ENCODE measurements at regions of chr4 and their contacts with region 1.

Region 1: DNA sequence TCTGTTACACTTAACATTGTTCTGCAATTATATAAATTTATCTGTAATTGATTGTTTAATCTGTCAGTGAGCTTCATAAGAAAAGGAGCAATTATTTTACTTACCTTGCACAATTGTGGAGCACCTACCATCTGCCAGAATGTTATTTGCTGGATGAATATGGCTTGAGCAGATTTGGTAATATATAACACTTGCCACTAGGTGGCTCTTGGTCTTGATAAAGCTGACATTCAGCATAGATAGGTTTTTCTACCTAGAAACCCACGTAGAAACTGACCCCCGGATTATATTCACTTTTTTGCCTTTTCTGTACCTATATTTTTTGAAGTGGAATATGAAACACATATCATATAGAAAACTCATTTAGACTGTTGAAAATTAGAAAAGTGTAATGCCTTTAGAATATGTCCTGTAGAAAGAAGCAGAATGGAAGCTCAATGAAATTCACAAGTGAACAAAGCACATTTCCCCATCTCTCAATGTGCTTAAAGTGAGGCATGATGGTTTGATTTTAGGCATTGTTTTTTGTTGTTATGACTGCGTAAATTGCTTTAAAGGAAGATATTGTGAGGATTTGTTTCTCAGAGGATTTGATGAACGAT is 9.5 kb downstream of the RBPJ start:
- DNase-seq: no peak
- H3K4me3 ChIP-seq: peak overlapping the region in 1 of 4 experiments; percentile 38; a peak in 1 of 8 replicates
- H3K27ac ChIP-seq: peak overlapping the region; percentile 12; the same call in 1 of the 2 replicates
- H3K4me1 ChIP-seq: peaks cover 7 to 15% (median 14%) of the 10 kb centered on the region in 4 experiments; a peak in 6 of 7 replicates
- H3K27me3 ChIP-seq: no peaks in the 10 kb centered on the region
- CTCF ChIP-seq: peak in 2 of 3 experiments; percentile 52 to 65; a peak in 2 of 4 replicates
- EP300 ChIP-seq: no peak
- POLR2A ChIP-seq: no peak
- RAD21 ChIP-seq: peak; percentile 60 to 67

Region 2: DNA sequence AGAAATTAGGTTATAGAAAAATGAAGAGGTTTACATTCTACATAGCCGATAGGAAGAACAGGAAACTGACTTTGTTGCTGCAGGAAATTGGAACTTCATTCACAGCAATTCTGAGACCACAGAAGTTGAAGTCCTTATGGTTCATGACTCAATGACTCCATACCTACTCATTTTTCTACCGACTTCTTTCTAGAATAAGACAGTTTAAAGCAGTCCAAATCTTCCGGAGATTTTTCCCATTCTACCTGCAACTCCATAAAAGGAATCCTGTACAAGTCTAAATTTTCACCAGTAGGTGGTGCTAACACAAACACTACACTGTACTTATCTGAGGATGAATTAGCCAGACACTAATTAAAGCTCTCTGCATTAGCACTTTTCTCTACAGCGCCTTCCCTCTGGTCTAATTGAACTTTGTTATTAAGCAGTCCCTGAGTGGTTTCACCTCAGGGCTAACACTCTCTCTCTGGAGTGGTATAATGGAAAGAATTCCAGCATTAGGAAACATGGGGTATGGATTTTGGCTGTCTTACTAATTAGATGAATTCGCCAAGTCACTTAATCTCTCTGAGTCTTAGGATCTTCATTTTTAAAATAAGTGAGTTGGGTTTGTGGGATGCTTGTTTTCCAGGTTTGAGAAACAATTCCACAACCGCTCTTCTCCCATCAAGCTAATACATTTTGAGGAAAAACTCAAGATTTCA is 248.3 kb before region 1 on chr4:
- CTCF ChIA-PET with region 1: interaction called, 17 read pairs
- POLR2A ChIA-PET with region 1: no interaction called
- DNase-seq: no peak
- H3K4me3 ChIP-seq: no peak overlapping the region
- H3K27ac ChIP-seq: no peak overlapping the region
- H3K4me1 ChIP-seq: peaks cover 0 to 4% (median 0%) of the 10 kb centered on the region in 4 experiments; a peak in 2 of 7 replicates
- H3K27me3 ChIP-seq: no peaks in the 10 kb centered on the region
- CTCF ChIP-seq: peak in 2 of 3 experiments; percentile 39 to 67; a peak in 2 of 4 replicates
- EP300 ChIP-seq: no peak
- POLR2A ChIP-seq: no peak
- RAD21 ChIP-seq: peak; percentile 68 to 70

Region 3: GRCh38 chr4:26342328-26343037 is 12.2 kb after region 1 on chr4:
- CTCF ChIA-PET with region 1: interaction called, 49 read pairs
- POLR2A ChIA-PET with region 1: interaction called, 13 read pairs
- DNase-seq: no peak
- H3K4me3 ChIP-seq: no peak overlapping the region
- H3K27ac ChIP-seq: no peak overlapping the region
- H3K4me1 ChIP-seq: peaks cover 0 to 13% (median 5%) of the 10 kb centered on the region in 4 experiments; a peak in 5 of 7 replicates
- H3K27me3 ChIP-seq: no peaks in the 10 kb centered on the region
- CTCF ChIP-seq: no peak
- EP300 ChIP-seq: no peak
- POLR2A ChIP-seq: no peak
- RAD21 ChIP-seq: no peak

Region 4: GRCh38 chr4:26356081-26356501 is 25.8 kb after region 1 on chr4:
- CTCF ChIA-PET with region 1: interaction called, 33 read pairs
- POLR2A ChIA-PET with region 1: no interaction called
- DNase-seq: no peak
- H3K4me3 ChIP-seq: no peak overlapping the region
- H3K27ac ChIP-seq: no peak overlapping the region
- H3K4me1 ChIP-seq: peaks cover 0 to 12% (median 7%) of the 10 kb centered on the region in 4 experiments; a peak in 4 of 7 replicates
- H3K27me3 ChIP-seq: no peaks in the 10 kb centered on the region
- CTCF ChIP-seq: no peak
- EP300 ChIP-seq: no peak
- POLR2A ChIP-seq: no peak
- RAD21 ChIP-seq: no peak

Region 5: DNA sequence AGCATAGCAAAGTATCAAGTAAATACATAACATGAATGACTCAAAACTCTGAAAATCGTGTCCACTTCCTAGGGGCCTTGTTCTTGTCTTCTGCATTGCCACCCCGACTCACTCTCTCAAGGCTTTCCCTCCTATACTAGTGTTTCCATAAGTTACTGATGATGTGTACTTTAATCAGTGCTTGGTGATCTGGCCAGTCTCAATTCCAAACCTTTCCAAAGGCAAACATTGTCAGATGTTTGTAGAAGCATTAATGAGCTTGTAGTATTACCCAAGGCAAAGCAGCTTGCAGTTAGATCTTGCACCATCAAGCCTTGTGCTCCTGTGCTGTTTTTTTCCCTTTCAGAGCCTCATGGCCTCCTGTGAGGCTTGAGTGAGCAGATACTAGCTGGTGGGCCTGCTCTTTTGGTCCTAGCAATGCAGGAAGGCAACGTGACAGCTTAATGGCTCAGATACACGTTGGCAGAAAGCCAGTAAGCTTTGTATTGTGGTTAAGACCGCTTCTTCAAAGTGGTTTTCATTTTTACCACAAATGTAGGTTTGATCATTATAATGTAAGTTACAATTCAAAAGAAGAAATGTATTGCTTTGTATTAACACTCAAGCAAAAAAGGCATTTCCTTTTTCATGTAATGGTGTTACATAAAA is 42.4 kb after region 1 on chr4:
- CTCF ChIA-PET with region 1: interaction called, 15 read pairs
- POLR2A ChIA-PET with region 1: no interaction called
- DNase-seq: no peak
- H3K4me3 ChIP-seq: no peak overlapping the region
- H3K27ac ChIP-seq: no peak overlapping the region
- H3K4me1 ChIP-seq: peaks cover 0 to 16% (median 10%) of the 10 kb centered on the region in 4 experiments; a peak in 4 of 7 replicates
- H3K27me3 ChIP-seq: no peaks in the 10 kb centered on the region
- CTCF ChIP-seq: no peak
- EP300 ChIP-seq: no peak
- POLR2A ChIP-seq: no peak
- RAD21 ChIP-seq: no peak

Region 6: DNA sequence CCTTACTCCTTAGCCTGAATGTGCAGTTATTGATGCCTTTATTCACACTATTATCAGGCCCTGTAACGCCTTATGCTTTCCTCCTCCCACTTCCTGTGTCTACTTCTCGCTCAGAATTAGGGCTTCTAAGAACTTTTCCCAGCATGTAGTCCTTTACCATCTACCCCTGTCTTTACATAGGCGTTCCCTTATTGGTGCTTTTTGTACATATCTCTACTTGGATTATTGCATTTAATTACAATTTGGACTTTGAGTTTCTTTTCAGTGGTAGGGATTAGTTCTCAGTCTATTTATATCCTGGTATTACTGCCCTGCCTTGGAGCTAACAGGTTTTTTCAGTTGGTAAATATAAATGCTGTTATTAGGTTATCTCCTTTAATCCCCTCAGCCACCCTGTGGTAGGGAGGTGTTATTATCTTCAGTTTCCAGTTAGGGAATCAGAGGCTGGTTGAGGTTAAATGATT is 74.5 kb after region 1 on chr4:
- CTCF ChIA-PET with region 1: interaction called, 66 read pairs
- POLR2A ChIA-PET with region 1: no interaction called
- DNase-seq: no peak
- H3K4me3 ChIP-seq: no peak overlapping the region
- H3K27ac ChIP-seq: no peak overlapping the region
- H3K4me1 ChIP-seq: peaks cover 0 to 10% (median 4%) of the 10 kb centered on the region in 4 experiments; a peak in 4 of 7 replicates
- H3K27me3 ChIP-seq: no peaks in the 10 kb centered on the region
- CTCF ChIP-seq: peak in 2 of 3 experiments; percentile 9 to 12; a peak in 1 of 4 replicates
- EP300 ChIP-seq: no peak
- POLR2A ChIP-seq: no peak
- RAD21 ChIP-seq: peak in 1 of 2 experiments; percentile 14; a peak in 1 of 4 replicates

Measured in H1 (cell line).